CD4-positive, alpha-beta T cell (primary cell): ENCODE measurements at regions of chrX and their contacts with region 1.

Region 1: GRCh38 chrX:77899081-77899828 is at the start of gene COX7B:
- DNase-seq: peak; percentile 18 to 95 (median 47)
- ATAC-seq: peak; percentile 62
- H3K4me3 ChIP-seq: peak within 1 kb of the TSS; percentile 77
- H3K4me3 Mint-ChIP-seq: peak within 1 kb of the TSS; percentile 95
- H3K27ac ChIP-seq: peak within 1 kb of the TSS; percentile 80 to 82
- H3K27ac Mint-ChIP-seq: peak within 1 kb of the TSS; percentile 99
- H3K4me1 ChIP-seq: peaks cover 17% of the 10 kb centered on the region
- H3K4me1 Mint-ChIP-seq: peaks cover 37% of the 10 kb centered on the region
- H3K27me3 ChIP-seq: no peaks in the 10 kb centered on the region
- H3K27me3 Mint-ChIP-seq: no peaks in the 10 kb centered on the region
- CTCF ChIP-seq: peak; percentile 48
- total RNA-seq, gene COX7B: 106 to 117 TPM

Region 2: GRCh38 chrX:77785486-77786364 is 113.5 kb before region 1 on chrX and contains the start of gene ATRX:
- CTCF ChIA-PET with region 1: no interaction called
- POLR2A ChIA-PET with region 1: interaction called, 17 read pairs
- intact Hi-C with region 1: loop called (anchors 5 kb)
- DNase-seq: peak; percentile 53 to 91 (median 70)
- ATAC-seq: peak; percentile 88
- H3K4me3 ChIP-seq: peak within 1 kb of the TSS; percentile 92
- H3K4me3 Mint-ChIP-seq: peak within 1 kb of the TSS; percentile 99
- H3K27ac ChIP-seq: peak within 1 kb of the TSS; percentile 77 to 91
- H3K27ac Mint-ChIP-seq: peak within 1 kb of the TSS; percentile 97
- H3K4me1 ChIP-seq: peaks cover 25% of the 10 kb centered on the region
- H3K4me1 Mint-ChIP-seq: peaks cover 54% of the 10 kb centered on the region
- H3K27me3 ChIP-seq: no peaks in the 10 kb centered on the region
- H3K27me3 Mint-ChIP-seq: no peaks in the 10 kb centered on the region
- CTCF ChIP-seq: no peak
- total RNA-seq, gene ATRX: 72.7 to 79.5 TPM

Region 3: DNA sequence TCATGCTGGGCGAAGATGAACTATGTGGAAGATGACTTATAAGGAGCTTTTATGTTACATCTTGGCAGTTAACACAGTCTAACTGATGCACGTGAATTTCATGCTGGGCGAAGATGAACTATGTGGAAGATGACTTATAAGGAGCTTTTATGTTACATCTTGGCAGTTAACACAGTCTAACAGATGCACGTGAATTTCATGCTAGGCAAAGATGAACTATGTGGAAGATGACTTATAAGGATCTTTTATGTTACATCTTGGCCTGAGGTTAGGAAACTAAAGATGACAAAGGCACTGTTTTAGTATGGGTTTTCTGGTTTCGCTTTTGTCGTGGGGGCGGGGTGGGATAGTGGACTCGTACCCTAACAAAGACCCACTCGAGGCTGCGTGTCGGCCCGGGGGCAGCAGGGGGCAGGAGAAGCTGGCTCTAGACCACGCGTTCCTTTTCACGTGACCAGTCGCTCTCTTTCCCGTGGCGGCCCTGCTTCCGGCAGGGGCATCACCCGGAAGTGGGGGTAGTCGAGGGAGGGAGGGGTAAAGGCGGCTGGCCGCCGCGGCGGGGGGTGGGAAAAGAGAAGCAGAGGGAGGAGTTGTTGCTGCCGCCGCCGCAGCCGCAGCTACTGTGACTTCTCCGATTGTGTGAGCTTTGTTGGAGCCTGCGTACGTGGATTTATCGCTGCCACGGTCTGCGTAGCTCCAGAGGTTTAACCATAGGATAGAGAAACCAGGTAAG is 11.0 kb after region 1 on chrX and contains the start of gene ATP7A:
- CTCF ChIA-PET with region 1: interaction called, 30 read pairs
- POLR2A ChIA-PET with region 1: interaction called, 67 read pairs
- intact Hi-C with region 1: loop called in 1 of 2 experiments (anchors 2 kb)
- DNase-seq: peak; percentile 77 to 95 (median 86)
- ATAC-seq: peak; percentile 90
- H3K4me3 ChIP-seq: peak within 1 kb of the TSS; percentile 80
- H3K4me3 Mint-ChIP-seq: peak within 1 kb of the TSS; percentile 97
- H3K27ac ChIP-seq: peak within 1 kb of the TSS; percentile 77 to 82
- H3K27ac Mint-ChIP-seq: peak within 1 kb of the TSS; percentile 93
- H3K4me1 ChIP-seq: peaks cover 3% of the 10 kb centered on the region
- H3K4me1 Mint-ChIP-seq: peaks cover 29% of the 10 kb centered on the region
- H3K27me3 ChIP-seq: no peaks in the 10 kb centered on the region
- H3K27me3 Mint-ChIP-seq: no peaks in the 10 kb centered on the region
- CTCF ChIP-seq: peak; percentile 55
- total RNA-seq, gene ATP7A: 12.1 to 12.8 TPM

Region 4: DNA sequence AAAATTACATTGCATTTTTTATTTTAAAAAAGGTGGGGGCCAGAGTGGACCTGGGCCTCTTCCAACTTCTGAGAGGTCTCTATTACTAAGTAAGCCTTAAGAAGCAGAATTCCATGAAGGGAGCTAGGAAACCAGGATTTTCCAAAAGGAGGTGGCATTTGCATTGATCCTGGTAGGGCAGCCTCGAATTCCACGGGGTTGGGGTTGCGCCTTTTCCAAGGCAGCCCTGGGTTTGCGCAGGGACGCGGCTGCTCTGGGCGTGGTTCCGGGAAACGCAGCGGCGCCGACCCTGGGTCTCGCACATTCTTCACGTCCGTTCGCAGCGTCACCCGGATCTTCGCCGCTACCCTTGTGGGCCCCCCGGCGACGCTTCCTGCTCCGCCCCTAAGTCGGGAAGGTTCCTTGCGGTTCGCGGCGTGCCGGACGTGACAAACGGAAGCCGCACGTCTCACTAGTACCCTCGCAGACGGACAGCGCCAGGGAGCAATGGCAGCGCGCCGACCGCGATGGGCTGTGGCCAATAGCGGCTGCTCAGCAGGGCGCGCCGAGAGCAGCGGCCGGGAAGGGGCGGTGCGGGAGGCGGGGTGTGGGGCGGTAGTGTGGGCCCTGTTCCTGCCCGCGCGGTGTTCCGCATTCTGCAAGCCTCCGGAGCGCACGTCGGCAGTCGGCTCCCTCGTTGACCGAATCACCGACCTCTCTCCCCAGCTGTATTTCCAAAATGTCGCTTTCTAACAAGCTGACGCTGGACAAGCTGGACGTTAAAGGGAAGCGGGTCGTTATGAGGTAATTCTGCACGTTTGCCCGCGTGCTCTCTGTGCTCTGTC is 204.6 kb after region 1 on chrX and contains the start of gene PGK1:
- CTCF ChIA-PET with region 1: interaction called, 3 read pairs
- POLR2A ChIA-PET with region 1: interaction called, 21 read pairs
- intact Hi-C with region 1: loop called (anchors 5 kb)
- DNase-seq: peak; percentile 83 to 97 (median 90)
- ATAC-seq: peak; percentile 91
- H3K4me3 ChIP-seq: peak within 1 kb of the TSS; percentile 98
- H3K4me3 Mint-ChIP-seq: peak within 1 kb of the TSS; percentile 98
- H3K27ac ChIP-seq: peak within 1 kb of the TSS; percentile 89 to 97
- H3K27ac Mint-ChIP-seq: peak within 1 kb of the TSS; percentile 99
- H3K4me1 ChIP-seq: peaks cover 27% of the 10 kb centered on the region
- H3K4me1 Mint-ChIP-seq: peaks cover 60% of the 10 kb centered on the region
- H3K27me3 ChIP-seq: no peaks in the 10 kb centered on the region
- H3K27me3 Mint-ChIP-seq: no peaks in the 10 kb centered on the region
- CTCF ChIP-seq: no peak
- total RNA-seq, gene PGK1: 267 to 281 TPM

Region 5: DNA sequence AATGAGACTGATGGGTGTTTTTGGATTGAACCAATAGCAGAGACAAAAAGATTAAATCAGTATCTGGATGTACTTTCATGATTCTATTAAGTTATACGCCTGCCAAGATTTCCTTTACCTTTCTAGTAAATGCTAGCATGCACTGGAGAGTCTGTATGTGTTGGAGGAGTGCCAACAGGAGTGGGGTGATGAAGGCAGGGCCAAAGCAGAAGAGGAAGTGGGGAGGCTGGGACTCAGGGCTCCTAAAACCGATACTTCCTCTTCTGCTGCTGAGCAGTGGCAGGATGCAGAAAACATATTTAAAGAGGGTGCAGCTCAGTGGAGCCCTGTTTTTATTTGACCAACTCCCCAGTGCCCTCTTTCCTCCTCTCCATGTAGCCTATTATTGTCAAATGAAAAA is 422.6 kb after region 1 on chrX:
- CTCF ChIA-PET with region 1: no interaction called
- POLR2A ChIA-PET with region 1: no interaction called
- intact Hi-C with region 1: loop called in 1 of 2 experiments (anchors 10 kb)
- DNase-seq: peak in 13 of 14 experiments; percentile 16 to 81 (median 43)
- ATAC-seq: peak; percentile 92
- H3K4me3 ChIP-seq: no peak overlapping the region
- H3K4me3 Mint-ChIP-seq: peak overlapping the region; percentile 49
- H3K27ac ChIP-seq: no peak overlapping the region
- H3K27ac Mint-ChIP-seq: peak overlapping the region; percentile 71
- H3K4me1 ChIP-seq: peaks cover 13% of the 10 kb centered on the region
- H3K4me1 Mint-ChIP-seq: peaks cover 38% of the 10 kb centered on the region
- H3K27me3 ChIP-seq: no peaks in the 10 kb centered on the region
- H3K27me3 Mint-ChIP-seq: no peaks in the 10 kb centered on the region
- CTCF ChIP-seq: no peak